Head of caudate nucleus (tissue), 42 donors: ENCODE measurements at regions of chr6 and their contacts with region 1.

Region 1: GRCh38 chr6:57316581-57317059 is 810 bp upstream of the PRIM2 start:
- DNase-seq: peak; percentile 72 to 95 (median 87)

Region 2: GRCh38 chr6:56902641-56903464 is 413.8 kb before region 1 on chr6:
- intact Hi-C with region 1: loop called (anchors 2 kb)
- DNase-seq: peak in 13 of 42 donors; percentile 2 to 46 (median 11)

Region 3: DNA sequence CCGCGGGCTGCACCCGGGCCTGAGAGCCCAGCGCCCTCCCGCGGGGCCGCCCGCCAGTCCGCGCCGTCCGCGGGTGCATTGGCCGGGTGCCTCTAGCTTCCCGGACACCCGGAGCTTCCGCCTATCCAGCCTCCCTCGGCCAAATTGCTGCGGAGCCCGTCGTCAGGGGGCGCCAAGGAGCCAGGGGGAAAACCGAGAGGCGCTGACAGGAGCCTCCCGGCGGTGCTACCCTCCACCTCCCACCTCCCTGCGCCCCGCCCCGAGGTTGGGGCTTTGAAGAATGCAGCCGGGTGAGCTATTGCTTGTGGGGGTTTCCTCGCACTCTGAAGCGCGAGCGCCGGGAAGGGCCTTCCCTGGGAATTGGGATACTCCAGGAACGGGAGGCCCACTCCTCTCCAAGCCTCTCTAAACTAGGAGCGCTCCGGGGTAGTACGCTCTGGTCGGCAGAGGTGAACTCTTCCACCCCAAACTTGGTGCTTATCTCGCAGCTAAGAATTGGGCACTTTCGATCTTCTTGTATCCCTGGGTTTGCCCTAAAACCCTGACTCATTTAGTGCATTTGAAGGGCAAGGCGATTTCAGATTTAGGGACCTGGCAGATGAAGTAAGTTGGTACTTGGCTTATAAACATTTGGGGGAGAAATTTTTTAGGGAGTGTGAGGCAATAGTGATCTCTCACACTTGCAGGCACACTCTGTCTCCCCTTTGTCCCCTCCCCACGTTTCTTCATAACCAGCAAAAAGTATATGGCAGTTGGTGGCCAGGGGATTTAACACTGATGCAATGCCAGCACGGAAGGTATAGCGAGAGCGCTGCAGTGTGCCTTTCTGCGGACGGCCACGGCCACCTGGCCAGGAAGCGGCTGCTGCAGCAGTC is 361.2 kb before region 1 on chr6:
- intact Hi-C with region 1: loop called (anchors 2 kb)
- DNase-seq: peak in 40 of 42 donors; percentile 64 to 94 (median 88)

Region 4: DNA sequence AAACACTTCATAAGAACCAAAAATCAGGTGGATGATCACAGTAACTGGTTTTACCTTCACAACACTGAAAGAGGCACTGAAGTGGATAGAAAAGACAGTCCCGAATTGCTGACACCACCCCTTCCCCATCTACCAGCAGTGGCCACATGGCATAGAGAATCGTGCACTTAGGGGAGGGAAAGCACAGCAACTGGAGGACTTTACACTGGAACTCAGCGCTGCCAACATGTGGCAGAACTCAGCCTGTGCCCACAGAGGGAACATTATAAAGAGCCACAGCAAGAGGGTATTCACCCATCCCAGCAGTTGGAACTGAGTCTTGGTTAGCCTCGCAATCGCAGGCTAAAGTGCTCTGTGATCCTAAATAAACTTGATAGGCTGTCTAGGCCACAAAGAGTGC is 276.6 kb before region 1 on chr6:
- intact Hi-C with region 1: loop called (anchors 10 kb)
- DNase-seq: no peak

Region 5: DNA sequence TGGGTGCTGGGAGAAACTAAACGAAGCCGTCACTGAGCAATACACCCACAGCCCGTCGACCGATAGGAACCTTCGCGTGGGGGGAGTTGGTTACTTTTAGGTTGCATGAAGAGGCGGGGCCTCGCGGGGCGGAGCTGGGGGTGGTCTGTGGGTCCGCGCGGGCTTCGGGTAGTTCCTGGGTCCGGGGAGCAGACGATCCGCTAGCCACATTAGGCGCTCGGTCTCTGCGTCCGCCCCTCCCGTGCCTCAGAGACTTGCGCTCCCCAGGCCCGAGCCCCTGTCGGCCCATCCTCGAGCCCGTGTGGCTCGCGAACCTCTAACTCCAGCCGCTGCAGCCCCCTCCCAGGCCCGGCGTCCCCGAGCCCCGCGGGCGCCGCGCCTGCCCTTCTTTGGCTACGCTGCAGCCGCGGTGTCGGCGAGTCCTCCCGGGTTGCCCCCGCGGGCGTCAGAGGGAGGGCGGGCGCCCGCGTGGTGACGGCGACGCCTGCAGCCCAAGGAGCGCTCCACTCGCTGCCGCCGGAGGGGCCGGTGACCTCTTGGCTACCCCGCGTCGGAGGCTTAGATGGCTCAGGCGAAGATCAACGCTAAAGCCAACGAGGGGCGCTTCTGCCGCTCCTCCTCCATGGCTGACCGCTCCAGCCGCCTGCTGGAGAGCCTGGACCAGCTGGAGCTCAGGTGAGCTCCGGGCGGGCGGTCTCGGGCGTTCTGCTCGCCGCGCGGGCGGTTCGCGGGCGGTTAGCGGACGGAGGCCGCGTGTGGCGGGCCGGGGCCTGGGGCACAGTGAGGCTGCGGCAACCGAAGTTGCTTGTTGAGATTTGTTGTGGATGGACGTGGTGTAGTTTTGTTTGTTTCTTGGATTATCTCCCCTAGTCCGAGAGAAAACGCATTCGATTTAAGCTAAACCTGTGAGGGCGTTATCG is 144.2 kb before region 1 on chr6 and contains the start of gene BAG2:
- intact Hi-C with region 1: loop called (anchors 10 kb)
- DNase-seq: peak; percentile 67 to 92 (median 80)

Region 6: GRCh38 chr6:57221936-57222742 is 94.5 kb before region 1 on chr6 and contains the start of gene RAB23:
- intact Hi-C with region 1: loop called (anchors 10 kb)
- DNase-seq: peak; percentile 56 to 92 (median 82)